ENCODE measurements at regions of chr14 and their contacts with region 1.

Region 1: DNA sequence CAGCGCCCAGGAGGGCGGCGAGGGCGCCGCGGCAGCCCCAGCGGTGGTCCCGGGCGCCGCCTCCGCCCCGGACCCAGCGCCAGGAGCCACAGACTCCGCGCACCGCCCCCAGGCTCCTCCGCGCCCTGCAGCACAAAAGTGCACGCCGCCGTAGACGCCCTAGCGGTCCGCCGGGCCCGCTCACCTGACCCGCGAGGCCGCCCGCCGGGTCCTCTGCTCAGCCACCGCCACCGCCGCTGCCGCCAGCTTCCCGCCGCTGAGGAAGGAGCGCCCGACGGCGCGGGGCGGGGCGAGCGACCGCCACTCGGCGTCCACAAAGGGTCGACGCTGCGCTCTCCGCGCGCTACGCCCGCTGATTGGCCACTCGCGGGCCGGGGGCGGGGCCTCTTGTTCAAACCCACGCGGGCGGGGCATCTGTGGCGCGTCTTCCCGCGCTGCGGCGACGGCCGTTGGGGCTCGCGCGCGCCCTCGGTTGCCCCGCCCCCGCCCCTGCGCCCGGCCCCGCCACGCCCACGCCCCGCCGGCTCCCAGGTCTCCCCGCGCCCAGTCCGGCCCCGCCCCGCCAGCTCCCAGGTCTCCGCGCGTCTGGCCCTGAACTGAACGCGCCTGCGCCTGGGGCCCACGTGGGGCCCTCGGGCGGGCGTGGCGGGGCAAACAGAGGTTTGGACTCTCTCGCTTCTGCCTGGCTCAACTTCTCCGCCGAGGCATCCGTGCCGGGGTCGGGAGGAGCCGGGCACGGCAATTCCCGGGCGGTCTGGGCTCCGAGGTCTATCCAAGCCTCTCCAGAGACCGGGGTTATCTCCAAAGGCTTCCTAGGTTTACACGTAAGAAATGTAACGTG is at the start of gene CDCA4:
- DNase-seq: peak; percentile 93 to 97
- H3K4me3 ChIP-seq: peak within 1 kb of the TSS; percentile 71
- H3K4me3 Mint-ChIP-seq: peak within 1 kb of the TSS; percentile 86
- H3K27ac Mint-ChIP-seq: peak within 1 kb of the TSS; percentile 87
- H3K4me1 ChIP-seq: peaks cover 15% of the 10 kb centered on the region
- H3K4me1 Mint-ChIP-seq: peaks cover 11% of the 10 kb centered on the region
- H3K27me3 ChIP-seq: no peaks in the 10 kb centered on the region
- H3K27me3 Mint-ChIP-seq: no peaks in the 10 kb centered on the region
- CTCF ChIP-seq: no peak
- total RNA-seq, gene CDCA4: 33.4 and 41.4 TPM in 2 replicates

Region 2: DNA sequence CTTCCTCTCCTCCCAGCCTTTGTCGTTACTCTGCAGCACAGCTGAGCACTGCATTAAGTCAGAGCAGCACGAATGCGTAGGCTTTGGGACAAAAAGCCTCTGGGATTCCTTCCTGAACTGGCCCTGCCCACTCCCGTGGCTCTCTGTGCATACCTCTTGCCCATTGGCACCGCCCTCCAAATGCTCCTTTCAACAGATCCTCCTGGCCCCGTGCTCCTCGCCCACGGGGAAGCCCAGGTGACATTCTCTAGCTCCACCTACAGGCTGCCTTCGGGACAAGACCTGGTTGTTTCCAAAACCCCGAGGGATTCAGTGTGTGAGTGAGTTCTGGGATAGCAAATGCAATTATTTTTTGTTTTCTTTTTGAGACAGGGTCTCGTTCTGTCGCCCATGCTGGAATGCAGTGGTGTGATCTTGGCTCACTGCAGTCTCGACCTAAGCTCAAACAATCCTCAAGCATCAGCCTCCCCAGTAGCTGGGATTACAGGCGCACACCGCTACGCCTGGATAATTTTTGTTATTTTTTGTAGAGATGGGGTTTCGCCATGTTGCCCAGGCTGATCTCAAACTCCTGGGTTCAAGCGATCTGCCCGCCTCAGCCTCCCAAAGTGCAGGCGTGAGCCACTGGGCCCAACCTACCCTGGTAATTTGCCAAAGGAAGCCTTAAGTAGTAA is 1110.6 kb before region 1 on chr14:
- CTCF ChIA-PET with region 1: interaction called, 14 read pairs
- POLR2A ChIA-PET with region 1: no interaction called
- intact Hi-C with region 1: no loop called
- DNase-seq: peak; percentile 80 to 84
- H3K4me3 ChIP-seq: no peak overlapping the region
- H3K4me3 Mint-ChIP-seq: peak overlapping the region; percentile 15
- H3K27ac Mint-ChIP-seq: peak overlapping the region; percentile 35
- H3K4me1 ChIP-seq: no peaks in the 10 kb centered on the region
- H3K4me1 Mint-ChIP-seq: peaks cover 6% of the 10 kb centered on the region
- H3K27me3 ChIP-seq: no peaks in the 10 kb centered on the region
- H3K27me3 Mint-ChIP-seq: no peaks in the 10 kb centered on the region
- CTCF ChIP-seq: peak; percentile 83 to 89

Region 3: DNA sequence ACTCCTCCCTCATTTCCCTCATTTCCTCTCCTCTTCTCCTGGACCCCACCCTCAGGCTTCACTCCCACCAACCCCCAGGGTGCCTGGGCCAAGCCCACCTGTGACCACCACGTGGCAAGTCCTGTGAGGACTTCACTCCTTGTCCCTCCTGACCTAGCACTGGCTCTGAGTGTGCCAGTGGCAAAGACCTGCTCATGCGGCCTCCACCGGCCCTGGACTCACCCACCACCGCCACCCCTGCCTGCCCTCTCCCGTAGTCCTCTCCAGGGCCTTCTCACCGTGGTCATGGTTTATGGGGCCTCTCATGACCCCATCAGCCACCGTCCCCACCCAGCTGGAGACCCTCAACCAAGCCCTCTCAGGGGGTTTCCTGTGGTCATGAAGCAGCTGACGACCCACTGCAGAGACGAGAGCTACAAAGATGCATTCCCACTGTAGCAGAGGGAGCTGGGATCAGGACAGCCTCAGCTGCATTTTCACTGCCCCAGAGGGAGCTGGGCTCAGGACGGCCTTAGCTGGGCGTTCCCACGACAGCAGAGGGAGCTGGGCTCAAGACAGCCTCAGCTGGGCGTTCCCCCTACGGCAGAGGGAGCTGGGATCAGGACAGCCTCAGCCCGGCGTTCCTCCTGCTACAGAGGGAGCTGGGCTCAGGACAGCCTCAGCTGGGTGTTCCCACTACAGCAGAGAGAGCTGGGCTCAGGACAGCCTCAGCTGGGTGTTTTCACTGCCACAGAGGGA is 444.6 kb before region 1 on chr14:
- CTCF ChIA-PET with region 1: no interaction called
- POLR2A ChIA-PET with region 1: no interaction called
- intact Hi-C with region 1: no loop called
- DNase-seq: peak; percentile 22 to 46
- H3K4me3 ChIP-seq: no peak overlapping the region
- H3K4me3 Mint-ChIP-seq: no peak overlapping the region
- H3K27ac Mint-ChIP-seq: no peak overlapping the region
- H3K4me1 ChIP-seq: peaks cover 17% of the 10 kb centered on the region
- H3K4me1 Mint-ChIP-seq: no peaks in the 10 kb centered on the region
- H3K27me3 ChIP-seq: no peaks in the 10 kb centered on the region
- H3K27me3 Mint-ChIP-seq: no peaks in the 10 kb centered on the region
- CTCF ChIP-seq: no peak

Region 4: DNA sequence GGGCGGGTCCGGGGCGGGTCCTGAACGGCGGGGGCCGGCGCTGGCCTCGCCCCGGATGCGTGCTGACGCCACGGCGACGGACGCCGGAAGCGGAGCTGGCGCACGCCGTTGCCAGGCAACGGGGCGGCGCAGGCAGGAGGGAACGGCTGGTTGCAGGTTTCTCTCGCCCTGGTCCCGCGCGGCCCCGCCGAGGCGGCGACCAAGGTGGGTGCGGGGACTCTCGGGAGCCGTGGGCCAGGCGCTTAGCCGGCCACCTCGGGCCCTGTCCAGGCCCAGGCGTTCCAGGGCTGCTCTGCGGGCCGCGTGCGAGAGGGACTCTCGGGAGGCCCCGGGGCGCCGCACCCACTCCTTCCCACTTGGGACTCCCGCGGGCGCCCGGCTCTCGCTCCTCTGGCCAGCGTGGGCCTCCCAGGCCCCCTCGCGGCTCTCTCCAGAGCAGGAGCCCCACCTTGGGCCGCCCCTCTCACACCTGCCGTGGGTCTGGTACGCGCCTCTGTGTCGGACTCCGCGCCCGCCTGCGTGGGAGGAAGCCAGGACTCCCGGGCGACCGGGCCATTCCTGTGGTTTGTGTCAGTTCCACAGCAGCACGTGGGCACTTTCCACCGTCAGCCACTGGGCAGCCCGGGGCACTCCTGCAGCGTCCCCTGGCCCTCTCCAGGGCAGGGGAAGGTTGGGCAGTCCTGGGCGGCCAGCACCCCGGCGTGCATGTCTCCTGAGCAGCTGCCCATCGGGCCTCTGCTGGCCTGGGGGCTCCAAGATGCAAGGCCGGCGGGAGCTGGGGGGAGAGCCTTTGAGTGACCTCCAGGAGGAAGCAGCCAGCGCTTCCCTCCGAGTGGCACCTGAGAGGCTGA is 35.1 kb before region 1 on chr14 and contains the start of gene CLBA1:
- CTCF ChIA-PET with region 1: no interaction called
- POLR2A ChIA-PET with region 1: interaction called, 15 read pairs
- intact Hi-C with region 1: loop called (anchors 1 kb)
- DNase-seq: peak; percentile 87 to 92
- H3K4me3 ChIP-seq: peak within 1 kb of the TSS; percentile 62
- H3K4me3 Mint-ChIP-seq: peak within 1 kb of the TSS; percentile 66
- H3K27ac Mint-ChIP-seq: peak within 1 kb of the TSS; percentile 53
- H3K4me1 ChIP-seq: 0 out of 2 replicates have a peak, but pooled peaks cover 3% of the 10 kb centered on the region
- H3K4me1 Mint-ChIP-seq: no peaks in the 10 kb centered on the region
- H3K27me3 ChIP-seq: no peaks in the 10 kb centered on the region
- H3K27me3 Mint-ChIP-seq: no peaks in the 10 kb centered on the region
- CTCF ChIP-seq: no peak
- total RNA-seq, gene CLBA1: 3.0 and 3.2 TPM in 2 replicates

Region 5: DNA sequence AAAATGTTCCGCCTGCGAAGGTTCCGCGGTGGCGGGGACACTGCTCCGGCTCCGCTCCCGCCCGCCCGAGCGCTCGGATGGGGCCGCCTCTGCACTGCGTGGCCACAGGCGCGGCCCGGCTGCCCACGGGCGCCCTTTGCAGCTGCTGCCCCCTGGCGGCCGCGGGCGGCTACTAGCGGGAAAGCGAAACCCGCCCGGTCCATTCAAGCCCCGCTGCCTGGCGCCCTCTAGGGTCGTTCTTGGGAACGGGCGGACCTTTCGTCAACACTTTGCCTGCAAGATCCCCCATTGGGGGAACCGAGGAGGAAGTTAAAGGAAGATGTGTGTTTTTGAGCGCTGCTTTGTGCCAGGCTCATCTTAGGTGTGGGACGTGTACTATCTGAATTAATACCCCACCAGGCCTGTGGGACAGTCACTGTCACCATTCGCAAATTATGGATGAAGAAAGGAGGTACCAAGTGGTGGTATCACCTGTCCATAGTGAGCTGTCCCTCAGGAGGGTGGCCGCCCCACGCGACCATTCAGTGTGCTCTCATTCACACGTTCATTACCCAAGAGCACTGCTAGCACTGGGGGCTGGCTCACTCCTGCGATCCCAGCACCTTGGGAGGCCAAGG is 24.8 kb after region 1 on chr14:
- CTCF ChIA-PET with region 1: interaction called, 9 read pairs
- POLR2A ChIA-PET with region 1: interaction called, 4 read pairs
- intact Hi-C with region 1: loop called (anchors 1 kb)
- DNase-seq: peak; percentile 83 to 95
- H3K4me3 ChIP-seq: no peak overlapping the region
- H3K4me3 Mint-ChIP-seq: no peak overlapping the region
- H3K27ac Mint-ChIP-seq: no peak overlapping the region
- H3K4me1 ChIP-seq: peaks cover 3% of the 10 kb centered on the region; the same call in 1 of the 2 replicates
- H3K4me1 Mint-ChIP-seq: no peaks in the 10 kb centered on the region
- H3K27me3 ChIP-seq: no peaks in the 10 kb centered on the region; the same call in 1 of the 2 replicates
- H3K27me3 Mint-ChIP-seq: peaks cover 5% of the 10 kb centered on the region
- CTCF ChIP-seq: peak; percentile 99

Region 6: GRCh38 chr14:105086833-105087307 is 65.8 kb after region 1 on chr14:
- CTCF ChIA-PET with region 1: interaction called, 5 read pairs
- POLR2A ChIA-PET with region 1: interaction called, 3 read pairs
- intact Hi-C with region 1: loop called (anchors 1 kb)
- DNase-seq: peak; percentile 84 to 92
- H3K4me3 ChIP-seq: peak overlapping the region; percentile 43
- H3K4me3 Mint-ChIP-seq: peak overlapping the region; percentile 77
- H3K27ac Mint-ChIP-seq: peak overlapping the region; percentile 74
- H3K4me1 ChIP-seq: peaks cover 51% of the 10 kb centered on the region
- H3K4me1 Mint-ChIP-seq: peaks cover 2% of the 10 kb centered on the region
- H3K27me3 ChIP-seq: no peaks in the 10 kb centered on the region
- H3K27me3 Mint-ChIP-seq: peaks cover 13% of the 10 kb centered on the region
- CTCF ChIP-seq: peak; percentile 54 to 61

Region 7: GRCh38 chr14:105203057-105203531 is 182.1 kb after region 1 on chr14:
- CTCF ChIA-PET with region 1: no interaction called
- POLR2A ChIA-PET with region 1: no interaction called
- intact Hi-C with region 1: no loop called
- DNase-seq: peak; percentile 74 to 87
- H3K4me3 ChIP-seq: no peak overlapping the region
- H3K4me3 Mint-ChIP-seq: no peak overlapping the region
- H3K27ac Mint-ChIP-seq: no peak overlapping the region
- H3K4me1 ChIP-seq: 0 out of 2 replicates have a peak, but pooled peaks cover 3% of the 10 kb centered on the region
- H3K4me1 Mint-ChIP-seq: peaks cover 6% of the 10 kb centered on the region
- H3K27me3 ChIP-seq: no peaks in the 10 kb centered on the region
- H3K27me3 Mint-ChIP-seq: peaks cover 4% of the 10 kb centered on the region
- CTCF ChIP-seq: peak; percentile 91 to 93